ENCODE measurements at regions of chr2 and their contacts with region 1.

Region 1: DNA sequence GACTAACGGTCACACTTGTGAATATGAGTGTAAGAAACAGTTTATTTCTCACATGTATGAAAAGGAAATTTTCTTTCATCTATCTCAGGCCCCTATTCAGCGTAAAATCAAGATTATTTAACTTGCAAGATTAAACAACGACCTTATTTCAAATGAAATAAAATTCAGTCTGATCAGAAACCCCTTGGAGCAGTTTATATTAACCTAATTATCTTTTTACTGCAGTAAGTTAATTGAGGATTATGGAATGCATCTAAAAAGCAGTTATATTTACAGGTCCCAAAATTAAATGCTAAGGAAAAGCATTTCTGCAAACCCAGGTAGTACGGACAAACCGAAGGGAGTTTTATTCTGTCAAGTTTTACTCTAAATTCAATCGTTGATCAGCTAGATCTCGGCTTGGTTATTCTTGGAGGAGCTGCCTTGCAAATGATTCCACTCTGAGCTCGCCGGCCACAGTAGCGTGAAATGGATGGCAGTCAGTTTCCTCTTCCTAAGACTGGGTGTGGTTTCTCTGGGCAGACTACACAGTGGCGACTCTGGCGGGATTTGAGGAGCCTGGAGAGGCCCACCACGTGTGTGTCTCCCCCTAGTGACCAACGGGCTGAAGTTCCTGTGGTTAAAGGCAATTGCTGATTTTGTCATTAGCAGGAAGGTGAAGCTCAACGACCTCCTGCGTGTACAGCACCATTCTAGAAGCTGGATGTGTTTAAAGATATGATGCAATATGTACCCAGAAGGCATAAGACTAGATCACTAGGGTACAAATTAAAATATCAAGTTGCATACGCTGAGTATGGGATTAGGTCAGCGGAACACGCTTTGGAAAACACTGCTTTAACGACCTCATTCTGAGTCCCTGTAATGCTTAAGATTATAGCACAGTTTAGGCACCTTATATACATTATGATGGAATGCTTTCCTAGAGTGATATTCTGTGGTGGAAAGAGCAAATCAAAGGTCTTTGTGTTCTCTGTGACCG is 36.4 kb downstream of the PRKRA start:
- DNase-seq: peak; percentile 98
- H3K4me3 ChIP-seq: peak overlapping the region; percentile 55
- H3K27ac ChIP-seq: peak overlapping the region; percentile 95
- H3K4me1 ChIP-seq: peaks cover 10% of the 10 kb centered on the region
- H3K27me3 ChIP-seq: no peaks in the 10 kb centered on the region
- CTCF ChIP-seq: peak; percentile 94

Region 2: GRCh38 chr2:178112202-178113152 is 302.1 kb before region 1 on chr2 and contains the start of gene RBM45:
- CTCF ChIA-PET with region 1: interaction called, 14 read pairs
- POLR2A ChIA-PET with region 1: no interaction called
- intact Hi-C with region 1: loop called (anchors 1 kb)
- DNase-seq: peak; percentile 96
- H3K4me3 ChIP-seq: peak within 1 kb of the TSS; percentile 96
- H3K27ac ChIP-seq: peak within 1 kb of the TSS; percentile 69
- H3K4me1 ChIP-seq: peaks cover 5% of the 10 kb centered on the region
- H3K27me3 ChIP-seq: no peaks in the 10 kb centered on the region
- CTCF ChIP-seq: peak; percentile 98
- total RNA-seq, gene RBM45: 18.7 and 19.0 TPM in 2 replicates

Region 3: GRCh38 chr2:178128836-178129630 is 285.5 kb before region 1 on chr2:
- CTCF ChIA-PET with region 1: interaction called, 15 read pairs
- POLR2A ChIA-PET with region 1: no interaction called
- intact Hi-C with region 1: loop called (anchors 1 kb)
- DNase-seq: no peak
- H3K4me3 ChIP-seq: no peak overlapping the region
- H3K27ac ChIP-seq: no peak overlapping the region
- H3K4me1 ChIP-seq: no peaks in the 10 kb centered on the region
- H3K27me3 ChIP-seq: no peaks in the 10 kb centered on the region
- CTCF ChIP-seq: no peak

Region 4: DNA sequence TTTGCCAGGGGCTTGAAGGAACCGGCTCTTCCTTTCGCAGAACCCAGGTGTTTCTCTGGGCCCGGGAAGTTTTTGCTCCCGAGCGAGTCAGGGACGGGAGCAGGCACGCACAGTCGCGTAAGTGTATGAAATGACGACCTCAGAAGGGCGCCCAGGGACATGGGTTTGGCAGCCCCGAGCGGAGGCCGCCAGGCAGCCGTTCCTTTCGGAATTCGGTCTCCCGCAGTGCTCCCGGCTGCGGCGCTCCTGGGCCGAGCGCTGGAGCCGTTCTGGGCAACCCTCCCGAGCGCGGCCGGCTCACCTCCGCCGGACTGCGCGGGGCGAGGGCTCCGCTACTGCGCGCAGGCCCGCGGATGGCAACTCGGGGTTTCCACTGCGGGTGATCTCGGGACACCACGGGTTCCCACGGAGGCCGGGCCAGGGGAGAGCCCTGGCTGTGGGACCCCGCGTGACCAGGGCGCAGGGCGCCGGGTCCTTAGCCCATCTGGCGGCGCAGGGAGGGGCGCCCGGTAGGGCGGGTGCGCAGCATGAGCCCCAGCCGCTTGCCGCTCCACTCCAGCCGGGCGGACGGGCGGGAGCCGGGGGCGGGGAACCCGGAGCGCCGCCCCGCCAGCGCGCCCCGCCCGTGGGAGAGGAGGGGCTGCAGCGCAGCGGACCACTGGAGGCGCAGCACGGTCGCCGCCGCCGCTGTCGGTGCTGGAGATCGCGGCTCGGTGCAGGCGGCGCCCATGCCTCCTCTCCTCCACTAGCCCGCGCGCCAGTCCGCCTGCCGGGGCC is 220.5 kb before region 1 on chr2 and contains the start of gene OSBPL6:
- CTCF ChIA-PET with region 1: no interaction called
- POLR2A ChIA-PET with region 1: no interaction called
- intact Hi-C with region 1: loop called (anchors 10 kb)
- DNase-seq: peak; percentile 90
- H3K4me3 ChIP-seq: peak within 1 kb of the TSS; percentile 92
- H3K27ac ChIP-seq: peak within 1 kb of the TSS; percentile 72
- H3K4me1 ChIP-seq: peaks cover 32% of the 10 kb centered on the region
- H3K27me3 ChIP-seq: no peaks in the 10 kb centered on the region
- CTCF ChIP-seq: no peak
- total RNA-seq, gene OSBPL6: 19.3 and 20.3 TPM in 2 replicates

Region 5: DNA sequence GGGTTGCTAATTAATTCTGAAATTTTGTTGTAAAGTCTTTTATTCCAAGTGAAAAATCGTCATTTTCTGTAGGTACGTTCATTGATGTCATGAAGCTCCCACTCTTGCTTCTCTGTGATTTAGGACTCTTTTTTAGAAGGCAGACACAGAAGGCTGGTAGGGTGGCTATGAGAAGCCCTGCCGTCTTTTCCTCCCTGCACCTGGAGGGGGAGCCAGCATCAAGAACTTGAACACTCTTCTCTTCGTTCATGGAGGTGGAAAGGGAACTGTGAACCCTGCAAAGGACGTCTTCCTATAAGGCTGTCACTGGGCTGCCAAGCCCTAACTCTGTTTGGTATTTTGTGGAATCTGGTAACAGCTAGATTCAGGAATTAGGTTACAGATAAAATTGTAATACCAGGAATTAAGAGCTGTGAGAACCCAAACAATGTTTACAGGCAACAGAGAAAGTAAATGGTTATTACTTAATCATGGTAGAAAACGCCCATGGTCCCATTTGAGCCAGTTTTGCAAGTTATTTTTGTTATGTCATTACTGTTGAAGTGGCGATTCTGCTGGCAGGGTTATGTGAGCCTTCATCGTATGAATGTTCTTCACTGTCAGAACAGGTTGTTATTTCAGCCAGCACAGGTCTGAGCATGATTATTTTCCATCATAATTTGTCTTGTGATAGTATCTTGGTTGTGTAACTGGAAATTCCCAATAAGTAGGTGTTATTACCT is 108.0 kb before region 1 on chr2:
- CTCF ChIA-PET with region 1: no interaction called
- POLR2A ChIA-PET with region 1: interaction called, 16 read pairs
- intact Hi-C with region 1: loop called (anchors 5 kb)
- DNase-seq: peak; percentile 62
- H3K4me3 ChIP-seq: no peak overlapping the region
- H3K27ac ChIP-seq: no peak overlapping the region
- H3K4me1 ChIP-seq: peaks cover 7% of the 10 kb centered on the region
- H3K27me3 ChIP-seq: no peaks in the 10 kb centered on the region
- CTCF ChIP-seq: peak; percentile 67

Region 6: GRCh38 chr2:178589337-178589736 is 174.8 kb after region 1 on chr2:
- CTCF ChIA-PET with region 1: no interaction called
- POLR2A ChIA-PET with region 1: no interaction called
- intact Hi-C with region 1: loop called (anchors 2 kb)
- DNase-seq: no peak
- H3K4me3 ChIP-seq: no peak overlapping the region
- H3K27ac ChIP-seq: no peak overlapping the region
- H3K4me1 ChIP-seq: no peaks in the 10 kb centered on the region
- H3K27me3 ChIP-seq: no peaks in the 10 kb centered on the region
- CTCF ChIP-seq: no peak

Region 7: DNA sequence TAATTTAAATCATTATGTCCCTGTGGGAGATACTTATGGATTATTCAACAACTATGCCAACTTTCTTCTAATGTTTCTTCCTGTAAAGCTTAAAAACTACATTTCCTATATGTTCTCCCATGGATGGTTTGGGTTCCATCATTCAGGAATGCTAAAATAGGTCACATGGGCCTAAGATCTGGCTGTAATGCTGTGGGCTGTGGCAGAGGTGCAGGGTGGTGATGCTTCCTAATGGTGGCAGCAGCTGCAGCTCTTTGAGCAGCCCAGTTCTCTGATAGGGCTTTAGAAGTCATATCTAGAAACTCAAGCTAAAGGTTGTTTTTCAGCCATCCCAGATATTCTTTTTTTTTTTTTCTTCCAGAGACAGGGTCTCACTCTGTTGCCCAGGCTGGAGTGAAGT is 1180.7 kb after region 1 on chr2:
- CTCF ChIA-PET with region 1: no interaction called
- POLR2A ChIA-PET with region 1: no interaction called
- intact Hi-C with region 1: no loop called
- DNase-seq: peak; percentile 24
- H3K4me3 ChIP-seq: no peak overlapping the region
- H3K27ac ChIP-seq: no peak overlapping the region
- H3K4me1 ChIP-seq: no peaks in the 10 kb centered on the region
- H3K27me3 ChIP-seq: no peaks in the 10 kb centered on the region
- CTCF ChIP-seq: peak; percentile 32; the same call in 1 of the 2 replicates